ENCODE measurements at regions of chr7 and their contacts with region 1.

Region 1: DNA sequence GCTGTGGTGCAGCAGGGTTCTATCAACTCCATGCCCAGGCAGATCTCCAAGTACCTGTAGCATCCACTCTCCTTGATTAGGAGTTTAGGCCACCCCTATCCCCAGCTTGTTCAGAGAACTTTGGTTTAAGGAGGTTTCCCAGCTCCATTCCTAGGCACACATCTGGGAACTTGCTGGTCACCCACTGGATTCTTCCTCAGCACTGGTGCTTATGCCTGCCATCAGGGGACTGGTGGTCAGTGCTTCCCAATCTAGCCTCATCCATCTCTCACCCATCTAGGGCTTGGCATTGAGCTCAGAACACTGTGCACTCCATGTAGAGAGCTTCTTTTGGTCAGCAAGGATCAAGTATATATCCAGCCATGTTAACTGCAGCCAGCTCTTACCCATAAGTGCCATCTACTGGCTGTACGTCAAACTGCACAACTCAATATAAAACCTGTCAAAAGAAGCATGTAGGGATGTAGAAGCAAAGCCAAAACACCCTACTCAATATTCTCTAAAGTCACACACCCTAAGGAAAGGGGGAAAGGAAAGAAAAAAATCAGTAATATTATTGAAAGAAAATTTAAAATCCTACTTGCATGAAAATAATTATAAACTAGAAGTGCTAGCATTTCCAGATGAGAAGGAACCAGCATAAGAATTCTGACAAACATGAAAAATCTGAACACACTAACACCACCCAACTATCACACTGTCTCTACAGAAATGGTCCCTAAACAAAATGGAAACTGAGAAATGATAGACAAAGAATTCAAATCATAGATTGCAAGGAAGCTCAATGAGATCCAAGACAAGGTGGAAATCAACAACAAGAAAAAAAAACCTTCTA is 531.2 kb upstream of the STEAP1 start:
- DNase-seq: no peak
- ATAC-seq: peak in 2 of 4 donors; percentile 31 to 55
- H3K4me3 ChIP-seq: no peak overlapping the region
- H3K27ac ChIP-seq: no peak overlapping the region
- H3K4me1 ChIP-seq: no peaks in the 10 kb centered on the region
- H3K27me3 ChIP-seq: no peaks in the 10 kb centered on the region
- CTCF ChIP-seq: peak; percentile 27 to 59 (median 44)
- POLR2A ChIP-seq: no peak

Region 2: DNA sequence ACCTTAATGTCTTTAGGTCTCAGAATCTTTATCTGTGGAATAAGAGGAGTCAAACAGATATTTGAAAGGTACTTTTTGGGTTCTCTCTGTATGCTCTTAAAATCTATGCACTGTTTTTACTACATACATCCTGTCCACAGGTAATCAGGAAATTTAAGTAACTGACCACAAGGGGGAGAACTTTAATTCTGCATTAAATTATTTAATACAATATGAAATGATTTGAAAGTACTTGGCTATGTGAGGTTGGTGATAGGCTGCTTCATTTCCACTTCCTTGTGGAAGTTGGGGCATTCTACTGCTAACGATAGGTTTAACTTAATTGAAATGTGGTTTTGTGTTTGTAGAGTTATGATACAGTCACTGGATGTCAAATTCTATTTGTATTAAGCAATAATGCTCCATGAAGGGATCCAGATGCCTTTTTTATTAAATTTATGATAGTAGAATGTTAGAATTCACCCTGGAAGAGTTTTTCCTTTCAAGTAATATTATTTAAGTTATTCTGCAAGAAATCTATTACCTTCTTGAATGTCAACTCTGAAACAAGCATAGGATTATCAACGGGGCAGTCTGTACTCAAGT is 833.5 kb before region 1 on chr7:
- intact Hi-C with region 1: loop called in 3 of 10 experiments (anchors 5 to 10 kb)
- DNase-seq: no peak
- ATAC-seq: no peak
- H3K4me3 ChIP-seq: no peak overlapping the region
- H3K27ac ChIP-seq: no peak overlapping the region
- H3K4me1 ChIP-seq: no peaks in the 10 kb centered on the region
- H3K27me3 ChIP-seq: no peaks in the 10 kb centered on the region
- CTCF ChIP-seq: peak in 11 of 12 donors; percentile 27 to 60 (median 44)
- POLR2A ChIP-seq: no peak

Region 3: GRCh38 chr7:89334797-89335196 is 288.3 kb before region 1 on chr7:
- intact Hi-C with region 1: no loop called
- DNase-seq: no peak
- ATAC-seq: no peak
- H3K4me3 ChIP-seq: no peak overlapping the region
- H3K27ac ChIP-seq: no peak overlapping the region
- H3K4me1 ChIP-seq: no peaks in the 10 kb centered on the region
- H3K27me3 ChIP-seq: no peaks in the 10 kb centered on the region
- CTCF ChIP-seq: peak in 3 of 12 donors; percentile 24 to 30 (median 30)
- POLR2A ChIP-seq: no peak

Region 4: DNA sequence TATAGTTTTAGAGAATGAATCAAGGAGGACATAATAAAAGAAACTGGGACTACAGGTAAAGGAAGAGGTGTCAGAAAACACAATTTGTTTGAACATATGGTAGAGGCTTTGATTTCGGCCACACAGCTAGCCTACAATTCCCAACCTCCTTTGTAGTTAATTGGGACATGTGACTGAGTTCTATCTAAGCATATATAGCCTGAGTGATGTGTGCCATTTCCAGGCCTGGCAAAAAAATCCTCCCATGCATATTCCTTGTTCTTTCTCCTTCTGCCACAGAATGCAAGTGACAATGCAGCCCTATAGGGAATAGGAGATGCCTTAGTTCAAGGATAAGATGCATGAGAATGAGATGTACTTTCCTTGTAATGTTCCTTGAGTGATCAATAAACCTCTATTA is 59.5 kb before region 1 on chr7:
- intact Hi-C with region 1: loop called in 1 of 10 experiments (anchors 10 kb)
- DNase-seq: no peak
- ATAC-seq: no peak
- H3K4me3 ChIP-seq: no peak overlapping the region
- H3K27ac ChIP-seq: no peak overlapping the region
- H3K4me1 ChIP-seq: no peaks in the 10 kb centered on the region
- H3K27me3 ChIP-seq: no peaks in the 10 kb centered on the region
- CTCF ChIP-seq: no peak
- POLR2A ChIP-seq: no peak

Region 5: DNA sequence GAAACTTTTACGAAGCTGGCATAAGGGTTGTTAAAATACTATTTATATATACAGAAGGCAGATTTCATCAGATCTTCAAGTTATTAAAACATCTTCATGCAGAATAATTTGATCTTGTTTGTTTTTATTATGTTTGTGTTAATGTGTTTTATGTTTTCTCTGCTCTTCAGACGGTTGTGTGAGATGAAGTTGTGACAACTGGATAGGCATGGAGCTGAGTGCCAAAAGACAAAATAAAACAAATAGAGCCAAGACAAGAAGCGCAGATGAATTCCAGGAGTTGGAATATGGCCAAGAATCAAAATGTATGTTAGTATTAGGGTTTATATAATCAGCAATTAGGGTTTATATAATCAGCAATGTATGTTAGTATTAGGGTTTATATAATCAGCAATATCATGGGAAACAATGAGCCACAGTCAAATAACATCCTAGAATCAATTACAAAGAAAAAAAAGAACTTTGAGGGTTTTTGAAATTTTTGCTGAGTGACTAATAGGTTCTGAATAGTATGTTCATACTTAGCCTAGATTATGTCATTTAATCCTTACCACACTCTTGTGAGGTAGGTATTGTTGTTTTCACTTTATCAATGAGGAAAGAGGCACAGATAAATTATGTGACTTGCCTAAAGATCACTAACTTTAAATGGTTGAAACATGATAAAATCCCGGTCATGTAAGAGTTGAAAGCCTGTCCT is 43.2 kb after region 1 on chr7:
- intact Hi-C with region 1: no loop called
- DNase-seq: no peak
- ATAC-seq: no peak
- H3K4me3 ChIP-seq: no peak overlapping the region
- H3K27ac ChIP-seq: no peak overlapping the region
- H3K4me1 ChIP-seq: no peaks in the 10 kb centered on the region
- H3K27me3 ChIP-seq: no peaks in the 10 kb centered on the region
- CTCF ChIP-seq: no peak
- POLR2A ChIP-seq: no peak